AG04450 (cell line): ENCODE measurements at regions of chr1 and their contacts with region 1.

Region 1: DNA sequence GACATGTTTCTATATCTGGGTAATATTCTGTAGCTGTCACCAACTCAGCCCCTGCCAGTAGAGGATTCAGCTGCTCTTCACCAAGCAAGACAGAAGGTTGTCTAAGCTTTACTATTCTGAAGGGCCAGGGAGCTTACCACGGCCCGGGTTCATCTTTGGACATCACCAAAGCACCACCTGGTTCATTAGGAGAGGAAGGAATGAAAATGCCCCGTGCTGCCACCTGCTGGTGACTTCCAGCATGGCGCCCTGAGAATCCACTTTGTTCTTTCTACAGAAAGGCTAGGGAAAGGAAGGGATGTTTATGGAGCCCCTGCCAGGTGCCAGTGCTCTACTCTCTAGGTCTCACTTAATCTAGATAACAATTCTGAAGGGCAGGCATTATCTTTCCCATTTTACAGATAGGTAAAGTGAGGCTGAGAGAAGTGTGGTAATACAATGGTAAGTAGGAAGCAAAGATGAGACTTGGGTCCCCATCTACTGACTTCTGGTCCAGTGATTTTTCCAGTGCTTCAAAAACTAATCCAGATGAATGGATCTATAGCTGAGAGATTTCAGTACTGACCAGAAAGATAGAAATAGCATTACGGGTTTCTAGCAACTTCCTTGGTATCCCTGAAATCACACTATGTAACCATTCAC is 79.5 kb downstream of the BEND5 start:
- DNase-seq: no peak
- H3K4me3 ChIP-seq: no peak overlapping the region
- H3K27ac ChIP-seq: no peak overlapping the region
- H3K27me3 ChIP-seq: no peaks in the 10 kb centered on the region
- CTCF ChIP-seq: peak; percentile 93

Region 2: DNA sequence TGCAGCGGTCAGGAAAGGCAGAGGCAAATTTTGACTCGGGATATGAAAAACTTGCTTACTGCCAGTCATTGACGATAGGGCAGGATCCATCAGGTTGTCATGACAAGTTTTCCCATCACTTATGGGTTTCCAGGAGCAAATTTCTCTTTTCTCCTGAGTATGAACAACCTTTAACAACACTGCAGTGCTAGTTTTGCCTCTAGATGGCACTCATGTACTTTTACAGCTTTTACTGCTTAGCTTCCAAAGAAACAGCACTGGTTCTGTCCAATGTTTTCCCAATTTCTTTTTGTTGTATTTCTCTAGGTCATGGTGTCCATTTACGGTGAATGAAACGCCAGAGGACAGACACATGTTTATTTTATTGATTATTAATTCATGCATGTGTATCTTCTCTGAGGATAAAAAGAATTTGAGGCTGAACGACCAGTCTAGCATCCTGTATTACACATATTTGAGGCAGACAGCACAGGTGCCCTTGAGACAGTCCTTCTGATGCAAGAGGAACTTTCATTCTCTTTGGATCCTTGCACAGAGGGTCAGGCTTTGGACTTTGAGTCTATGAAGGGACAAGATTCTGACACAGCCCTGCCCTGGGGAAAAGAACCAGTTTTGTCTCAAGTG is 587.7 kb before region 1 on chr1:
- CTCF ChIA-PET with region 1: interaction called, 20 read pairs
- POLR2A ChIA-PET with region 1: no interaction called
- DNase-seq: peak; percentile 18
- H3K4me3 ChIP-seq: no peak overlapping the region
- H3K27ac ChIP-seq: no peak overlapping the region
- H3K27me3 ChIP-seq: no peaks in the 10 kb centered on the region
- CTCF ChIP-seq: peak; percentile 96

Region 3: GRCh38 chr1:48572646-48573261 is 124.4 kb before region 1 on chr1:
- CTCF ChIA-PET with region 1: interaction called, 11 read pairs
- POLR2A ChIA-PET with region 1: no interaction called
- DNase-seq: no peak
- H3K4me3 ChIP-seq: no peak overlapping the region
- H3K27ac ChIP-seq: no peak overlapping the region
- H3K27me3 ChIP-seq: no peaks in the 10 kb centered on the region
- CTCF ChIP-seq: peak; percentile 50